SK-N-SH (cell line): ENCODE measurements at regions of chr15 and their contacts with region 1.

Region 1: GRCh38 chr15:37880009-37880834 is 54.2 kb upstream of the TMCO5A start:
- DNase-seq: no peak
- H3K4me3 ChIP-seq: peak overlapping the region; percentile 17 to 34
- H3K27ac ChIP-seq: peak overlapping the region; percentile 90 to 99
- H3K4me1 ChIP-seq: peaks cover 24 to 51% of the 10 kb centered on the region in 2 experiments
- H3K27me3 ChIP-seq: no peaks in the 10 kb centered on the region
- CTCF ChIP-seq: peak; percentile 92
- EP300 ChIP-seq: peak; percentile 37 to 42; a peak in 2 of 4 replicates
- RAD21 ChIP-seq: peak; percentile 94

Region 2: GRCh38 chr15:36883713-36884517 is 996.3 kb before region 1 on chr15:
- CTCF ChIA-PET with region 1: interaction called, 16 read pairs
- POLR2A ChIA-PET with region 1: interaction called, 3 read pairs
- DNase-seq: peak; percentile 90
- H3K4me3 ChIP-seq: peak overlapping the region; percentile 28 to 46; a peak in 3 of 4 replicates
- H3K27ac ChIP-seq: peak overlapping the region; percentile 1 to 68; a peak in 2 of 4 replicates
- H3K4me1 ChIP-seq: peaks cover 0 to 17% of the 10 kb centered on the region in 2 experiments; a peak in 2 of 4 replicates
- H3K27me3 ChIP-seq: no peaks in the 10 kb centered on the region
- CTCF ChIP-seq: peak; percentile 89
- EP300 ChIP-seq: no peak
- RAD21 ChIP-seq: peak; percentile 88

Region 3: DNA sequence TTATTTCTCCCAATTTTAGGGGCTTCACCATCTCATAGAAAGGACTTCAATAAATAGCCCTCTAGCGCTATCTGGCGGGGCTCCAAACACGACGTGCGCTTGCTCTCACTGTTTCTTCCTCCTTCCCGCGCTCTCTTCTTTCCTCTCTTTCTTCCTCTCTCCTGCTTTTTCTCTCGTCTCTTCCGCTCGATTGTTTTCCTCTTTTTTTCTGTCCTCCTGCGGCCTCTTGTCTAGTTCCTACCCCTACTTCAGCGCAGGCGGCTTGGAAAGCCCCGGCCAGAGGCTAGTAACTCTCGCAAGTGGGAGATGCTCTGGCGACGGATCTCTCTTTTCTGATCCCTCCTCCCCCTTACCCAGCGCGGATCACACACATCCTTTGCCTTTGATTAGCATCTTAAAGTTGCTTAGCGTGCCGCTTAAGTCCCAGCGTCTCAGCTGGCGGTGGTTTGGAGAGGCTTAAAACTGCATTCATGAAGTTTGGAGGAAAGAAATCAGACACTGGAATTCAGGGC is 773.7 kb before region 1 on chr15:
- CTCF ChIA-PET with region 1: interaction called, 14 read pairs
- POLR2A ChIA-PET with region 1: interaction called, 8 read pairs
- DNase-seq: no peak
- H3K4me3 ChIP-seq: peak overlapping the region; percentile 74 to 92
- H3K27ac ChIP-seq: peak overlapping the region; percentile 99
- H3K4me1 ChIP-seq: peaks cover 2 to 10% of the 10 kb centered on the region in 2 experiments; a peak in 2 of 4 replicates
- H3K27me3 ChIP-seq: no peaks in the 10 kb centered on the region
- CTCF ChIP-seq: peak; percentile 61
- EP300 ChIP-seq: no peak
- RAD21 ChIP-seq: peak; percentile 61

Region 4: GRCh38 chr15:37208146-37209040 is 671.8 kb before region 1 on chr15:
- CTCF ChIA-PET with region 1: interaction called, 15 read pairs
- POLR2A ChIA-PET with region 1: no interaction called
- DNase-seq: peak; percentile 7
- H3K4me3 ChIP-seq: no peak overlapping the region
- H3K27ac ChIP-seq: peak overlapping the region; percentile 26 to 100
- H3K4me1 ChIP-seq: peaks cover 0 to 21% of the 10 kb centered on the region in 2 experiments; a peak in 2 of 4 replicates
- H3K27me3 ChIP-seq: no peaks in the 10 kb centered on the region
- CTCF ChIP-seq: no peak
- EP300 ChIP-seq: peak in 1 of 2 experiments; percentile 87; a peak in 2 of 4 replicates
- RAD21 ChIP-seq: peak; percentile 3; the same call in 1 of the 2 replicates

Region 5: DNA sequence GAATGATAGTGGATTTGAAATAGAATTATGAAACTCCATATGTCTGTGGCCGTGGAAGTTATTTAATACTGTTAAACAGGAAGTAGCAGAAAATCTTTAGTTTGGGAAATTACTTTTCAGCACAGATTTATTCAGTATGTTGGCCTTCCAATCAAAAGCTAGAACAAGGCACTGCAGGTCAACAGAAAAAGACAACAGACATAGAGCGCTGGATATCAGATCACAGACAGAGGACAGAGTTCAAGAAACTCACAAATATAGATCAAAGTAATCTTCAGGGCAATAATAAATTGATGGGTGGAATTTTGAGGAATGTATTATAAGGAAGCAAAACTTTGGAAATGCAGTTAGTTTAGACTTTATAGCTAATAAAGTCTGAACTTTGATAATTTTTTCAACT is 105.3 kb before region 1 on chr15:
- CTCF ChIA-PET with region 1: no interaction called
- POLR2A ChIA-PET with region 1: no interaction called
- DNase-seq: no peak
- H3K4me3 ChIP-seq: no peak overlapping the region
- H3K27ac ChIP-seq: no peak overlapping the region
- H3K4me1 ChIP-seq: peaks cover 0 to 12% of the 10 kb centered on the region in 2 experiments; a peak in 2 of 4 replicates
- H3K27me3 ChIP-seq: no peaks in the 10 kb centered on the region
- CTCF ChIP-seq: no peak
- EP300 ChIP-seq: no peak
- RAD21 ChIP-seq: no peak

Region 6: GRCh38 chr15:37793851-37794250 is 86.4 kb before region 1 on chr15:
- CTCF ChIA-PET with region 1: interaction called, 74 read pairs
- POLR2A ChIA-PET with region 1: interaction called, 25 read pairs
- DNase-seq: peak; percentile 60
- H3K4me3 ChIP-seq: no peak overlapping the region
- H3K27ac ChIP-seq: peak overlapping the region in 1 of 2 experiments; percentile 99; a peak in 2 of 4 replicates
- H3K4me1 ChIP-seq: peaks cover 15 to 32% of the 10 kb centered on the region in 2 experiments; a peak in 2 of 4 replicates
- H3K27me3 ChIP-seq: no peaks in the 10 kb centered on the region
- CTCF ChIP-seq: peak; percentile 64
- EP300 ChIP-seq: no peak; a peak in 1 of 4 replicates
- RAD21 ChIP-seq: peak; percentile 93

Region 7: DNA sequence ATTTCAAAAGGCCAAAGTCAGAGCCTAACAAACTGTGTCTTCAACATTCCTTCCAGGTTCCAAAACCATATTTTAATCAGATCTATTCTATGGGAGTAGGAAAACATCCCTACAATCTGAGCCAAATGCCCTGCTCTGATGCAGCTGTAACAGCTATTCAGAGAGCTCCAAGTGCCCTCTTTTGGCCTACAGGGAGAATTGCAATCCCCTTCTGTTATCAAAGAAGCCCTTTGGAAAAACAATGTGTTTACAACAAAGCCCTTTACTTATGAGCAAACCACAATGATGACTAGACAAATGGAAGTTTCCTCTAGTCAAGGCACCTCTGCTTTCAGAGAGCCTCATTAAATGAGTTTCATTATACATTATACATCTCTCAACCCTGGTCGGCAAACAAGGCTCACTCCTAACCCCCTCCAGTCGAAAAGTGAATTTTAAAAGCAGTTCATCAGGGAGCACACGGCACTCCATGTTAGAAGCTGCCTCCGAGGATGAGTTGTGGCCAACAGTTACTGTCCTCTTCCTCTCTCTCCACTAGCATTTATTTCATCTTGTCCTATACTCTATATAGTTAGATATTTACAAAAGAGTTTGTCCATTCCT is 11.6 kb after region 1 on chr15:
- CTCF ChIA-PET with region 1: interaction called, 35 read pairs
- POLR2A ChIA-PET with region 1: no interaction called
- DNase-seq: peak; percentile 40
- H3K4me3 ChIP-seq: no peak overlapping the region; a peak in 1 of 4 replicates
- H3K27ac ChIP-seq: peak overlapping the region in 1 of 2 experiments; percentile 34; a peak in 2 of 4 replicates
- H3K4me1 ChIP-seq: peaks cover 0 to 2% of the 10 kb centered on the region in 2 experiments; a peak in 2 of 4 replicates
- H3K27me3 ChIP-seq: no peaks in the 10 kb centered on the region
- CTCF ChIP-seq: peak; percentile 92
- EP300 ChIP-seq: no peak
- RAD21 ChIP-seq: peak; percentile 98